Activated CD4-positive, alpha-beta memory T cell treated with anti-CD3 and anti-CD28 coated beads, Interleukin-2, amount 10 ng/mL, durations not matched to agents 7 days and 5 days (primary cell): ENCODE measurements at regions of chr11 and their contacts with region 1.

Region 1: DNA sequence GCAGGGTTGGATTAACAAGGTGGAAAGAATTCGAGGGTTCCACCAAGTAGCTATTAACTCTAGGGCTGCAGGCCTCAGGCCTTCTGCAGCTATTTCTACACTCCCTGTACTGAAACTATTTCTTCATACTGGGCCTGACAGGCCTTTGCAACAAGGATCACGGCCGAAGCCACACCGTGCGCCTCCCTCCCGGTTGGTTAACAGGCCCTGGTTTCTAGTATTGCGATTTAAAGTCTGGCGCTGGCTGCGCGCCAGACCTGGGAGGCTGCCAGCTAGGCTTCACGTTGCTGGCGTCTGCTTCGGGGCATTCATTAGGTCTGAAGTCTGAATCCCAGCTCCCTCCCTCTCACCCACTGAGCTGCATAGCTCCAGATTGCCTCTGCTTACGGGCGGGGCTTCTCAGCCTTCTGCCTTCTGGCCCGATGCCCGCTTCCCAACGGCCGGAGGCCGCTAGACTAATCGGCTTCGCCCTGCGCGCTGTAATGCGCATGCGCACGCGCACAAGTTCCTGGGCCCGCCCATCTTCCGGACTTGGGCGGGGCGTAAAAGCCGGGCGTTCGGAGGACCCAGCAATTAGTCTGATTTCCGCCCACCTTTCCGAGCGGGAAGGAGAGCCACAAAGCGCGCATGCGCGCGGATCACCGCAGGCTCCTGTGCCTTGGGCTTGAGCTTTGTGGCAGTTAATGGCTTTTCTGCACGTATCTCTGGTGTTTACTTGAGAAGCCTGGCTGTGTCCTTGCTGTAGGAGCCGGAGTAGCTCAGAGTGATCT is 1.6 kb downstream of the LDHA start:
- DNase-seq: peak; percentile 97
- H3K4me3 Mint-ChIP-seq: peak overlapping the region; percentile 99
- H3K27ac Mint-ChIP-seq: peak overlapping the region; percentile 96
- H3K4me1 Mint-ChIP-seq: peaks cover 61% of the 10 kb centered on the region
- H3K27me3 Mint-ChIP-seq: no peaks in the 10 kb centered on the region

Region 2: GRCh38 chr11:18081551-18081950 is 314.4 kb before region 1 on chr11:
- CTCF ChIA-PET with region 1: no interaction called
- POLR2A ChIA-PET with region 1: no interaction called
- DNase-seq: no peak
- H3K4me3 Mint-ChIP-seq: no peak overlapping the region
- H3K27ac Mint-ChIP-seq: no peak overlapping the region
- H3K4me1 Mint-ChIP-seq: no peaks in the 10 kb centered on the region
- H3K27me3 Mint-ChIP-seq: no peaks in the 10 kb centered on the region

Region 3: DNA sequence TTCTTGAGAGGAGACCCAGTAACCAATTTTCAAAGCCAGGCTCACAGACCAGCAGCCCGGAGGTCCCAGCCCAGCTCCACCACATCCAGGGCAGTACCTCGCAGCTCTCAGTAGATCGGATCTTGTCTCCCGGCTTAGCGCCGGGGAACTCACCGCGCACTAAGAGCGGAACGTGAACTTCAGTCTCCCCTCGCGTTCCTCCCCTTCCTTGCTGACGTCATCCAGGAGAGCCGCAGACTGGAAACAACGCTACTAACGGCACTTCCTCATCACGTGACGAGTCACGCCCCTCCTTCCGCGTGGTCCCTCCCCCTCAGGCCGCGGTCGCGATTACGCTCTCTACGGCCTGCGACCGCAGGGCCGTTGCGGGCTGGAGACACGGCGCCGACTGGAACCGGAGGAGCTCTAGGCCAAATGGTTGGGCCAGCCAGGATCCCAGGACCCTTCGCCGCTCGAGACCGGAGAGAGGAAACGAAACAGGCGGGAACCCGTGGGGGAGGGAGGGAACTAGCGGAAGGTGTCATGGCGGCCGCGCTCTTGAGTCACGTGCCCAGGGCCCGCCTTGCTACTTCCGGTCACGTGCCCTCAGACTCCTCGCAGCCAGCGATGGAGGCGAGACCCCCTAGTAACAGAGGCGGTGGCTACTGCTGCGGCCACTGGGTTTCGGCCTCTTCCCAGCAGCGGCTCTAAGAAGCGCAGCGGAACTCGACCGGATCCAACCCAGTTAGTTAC is 73.8 kb before region 1 on chr11 and contains the starts of genes GTF2H1 and HPS5:
- CTCF ChIA-PET with region 1: interaction called, 24 read pairs
- POLR2A ChIA-PET with region 1: interaction called, 151 read pairs
- DNase-seq: peak; percentile 96
- H3K4me3 Mint-ChIP-seq: peak within 1 kb of the TSS; percentile 98
- H3K27ac Mint-ChIP-seq: peak within 1 kb of the TSS; percentile 96
- H3K4me1 Mint-ChIP-seq: peaks cover 65% of the 10 kb centered on the region
- H3K27me3 Mint-ChIP-seq: no peaks in the 10 kb centered on the region
- total RNA-seq, gene GTF2H1: 47.0 to 48.2 TPM
- total RNA-seq, gene HPS5: 20.3 to 22.6 TPM

Region 4: GRCh38 chr11:18364495-18365073 is 31.3 kb before region 1 on chr11:
- CTCF ChIA-PET with region 1: no interaction called
- POLR2A ChIA-PET with region 1: interaction called, 20 read pairs
- DNase-seq: no peak
- H3K4me3 Mint-ChIP-seq: no peak overlapping the region
- H3K27ac Mint-ChIP-seq: no peak overlapping the region
- H3K4me1 Mint-ChIP-seq: peaks cover 13% of the 10 kb centered on the region
- H3K27me3 Mint-ChIP-seq: no peaks in the 10 kb centered on the region

Region 5: GRCh38 chr11:18383388-18384156 is 12.3 kb before region 1 on chr11:
- CTCF ChIA-PET with region 1: interaction called, 42 read pairs
- POLR2A ChIA-PET with region 1: interaction called, 328 read pairs
- DNase-seq: peak; percentile 79
- H3K4me3 Mint-ChIP-seq: peak overlapping the region; percentile 58
- H3K27ac Mint-ChIP-seq: peak overlapping the region; percentile 99
- H3K4me1 Mint-ChIP-seq: peaks cover 42% of the 10 kb centered on the region
- H3K27me3 Mint-ChIP-seq: no peaks in the 10 kb centered on the region

Region 6: DNA sequence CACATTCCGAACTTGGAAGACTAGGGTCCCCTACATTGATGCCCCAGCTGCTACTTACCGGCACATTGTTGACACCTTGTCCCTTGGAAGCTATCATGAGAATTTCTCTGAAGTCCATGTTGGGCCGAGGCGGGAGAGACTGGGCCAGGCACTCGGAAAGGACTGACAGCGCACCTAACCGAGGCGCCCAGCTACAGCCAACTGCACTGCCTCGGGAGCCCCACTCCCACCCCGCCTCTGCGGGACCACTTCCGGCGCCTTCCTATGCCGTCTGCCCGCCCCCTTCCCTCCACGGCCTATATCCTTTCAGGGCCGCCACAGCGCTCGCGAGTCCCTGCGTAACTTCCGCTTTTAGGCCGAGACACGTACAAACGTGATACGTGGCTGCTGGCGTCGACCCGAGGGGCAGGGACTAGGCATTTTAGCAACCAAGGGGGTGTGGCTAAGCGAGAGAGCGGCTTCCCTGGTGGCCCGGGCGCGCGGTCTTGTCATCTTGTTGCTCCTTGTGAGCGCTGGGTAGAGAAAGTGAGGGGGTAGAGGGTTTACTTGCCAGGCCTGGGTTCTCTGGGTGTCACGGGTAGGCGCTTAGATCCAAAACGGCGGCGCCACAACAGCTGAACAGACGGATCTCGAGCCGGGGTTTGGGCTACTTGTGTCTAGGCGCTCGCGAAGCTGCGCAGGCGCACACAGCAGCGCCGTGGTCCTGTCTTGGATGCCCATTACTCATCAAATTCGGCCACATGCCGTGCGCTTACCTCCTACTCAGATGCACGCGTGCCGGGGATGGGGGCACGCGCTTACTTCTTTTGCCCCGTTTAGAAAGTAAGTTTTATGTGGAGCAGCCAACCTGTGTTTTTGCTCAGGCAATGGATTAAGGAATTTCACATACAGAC is 238.5 kb after region 1 on chr11 and contains the start of gene SPTY2D1:
- CTCF ChIA-PET with region 1: interaction called, 3 read pairs
- POLR2A ChIA-PET with region 1: interaction called, 26 read pairs
- DNase-seq: peak; percentile 99
- H3K4me3 Mint-ChIP-seq: peak within 1 kb of the TSS; percentile 86
- H3K27ac Mint-ChIP-seq: peak within 1 kb of the TSS; percentile 92
- H3K4me1 Mint-ChIP-seq: peaks cover 23% of the 10 kb centered on the region
- H3K27me3 Mint-ChIP-seq: no peaks in the 10 kb centered on the region
- total RNA-seq, gene SPTY2D1: 30.8 to 32.8 TPM